Heart right ventricle (tissue), 16 donors: ENCODE measurements at regions of chr11 and their contacts with region 1.

Region 1: GRCh38 chr11:110296226-110297075 is at the start of gene RDX:
- DNase-seq: peak; percentile 67 to 82
- ATAC-seq: peak; percentile 80 to 94 (median 90)
- H3K4me3 ChIP-seq: peak within 1 kb of the TSS; percentile 57 to 99 (median 86)
- H3K27ac ChIP-seq: peak within 1 kb of the TSS; percentile 89 to 99 (median 98)
- H3K4me1 ChIP-seq: peaks cover 4 to 52% (median 38%) of the 10 kb centered on the region in 9 donors
- H3K27me3 ChIP-seq: no peaks in the 10 kb centered on the region
- CTCF ChIP-seq: peak in 3 of 9 donors; percentile 14 to 37 (median 16)
- total RNA-seq, gene RDX: 105 to 140 (median 127) TPM

Region 2: GRCh38 chr11:110251837-110252236 is 44.6 kb before region 1 on chr11:
- intact Hi-C with region 1: loop called in 1 of 10 experiments (anchors 5 kb)
- DNase-seq: peak in 1 of 2 donors; percentile 43
- ATAC-seq: peak in 7 of 8 donors; percentile 49 to 97 (median 91)
- H3K4me3 ChIP-seq: no peak overlapping the region
- H3K27ac ChIP-seq: peak overlapping the region in 6 of 10 donors; percentile 11 to 67 (median 34)
- H3K4me1 ChIP-seq: peaks cover 0 to 33% (median 22%) of the 10 kb centered on the region in 9 donors
- H3K27me3 ChIP-seq: no peaks in the 10 kb centered on the region
- CTCF ChIP-seq: no peak

Region 3: DNA sequence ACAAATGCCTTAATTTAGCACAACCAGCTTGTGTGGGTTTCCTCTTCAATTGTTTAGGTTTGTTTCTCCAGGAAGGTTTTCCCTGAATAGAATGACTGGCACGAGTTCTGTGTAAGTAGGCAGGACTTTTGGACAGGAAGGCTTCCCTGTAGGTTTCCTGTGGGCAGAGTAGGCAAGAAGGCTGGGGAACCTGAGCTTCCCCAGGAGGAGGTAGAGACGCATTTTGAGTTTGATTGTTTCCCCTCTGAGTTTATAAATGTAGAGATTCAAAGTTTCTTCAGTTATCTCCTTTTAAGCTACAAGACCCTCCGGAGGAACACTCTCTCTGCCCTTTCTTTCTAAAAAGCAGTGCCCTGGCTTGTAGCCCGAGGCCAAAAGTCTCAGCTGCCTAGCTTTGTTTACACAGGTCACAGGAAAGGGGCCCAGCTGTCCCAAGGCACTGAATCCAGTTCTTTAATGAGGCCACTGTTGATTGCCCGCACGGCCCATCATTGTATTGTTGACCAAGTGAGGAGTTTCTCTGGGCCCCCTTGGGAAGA is 66.6 kb after region 1 on chr11:
- intact Hi-C with region 1: loop called in 5 of 10 experiments (anchors 2 to 10 kb)
- DNase-seq: peak in 1 of 2 donors; percentile 20
- ATAC-seq: peak in 7 of 8 donors; percentile 46 to 79 (median 75)
- H3K4me3 ChIP-seq: no peak overlapping the region
- H3K27ac ChIP-seq: peak overlapping the region in 9 of 10 donors; percentile 29 to 72 (median 47)
- H3K4me1 ChIP-seq: peaks cover 0 to 44% (median 24%) of the 10 kb centered on the region in 9 donors
- H3K27me3 ChIP-seq: no peaks in the 10 kb centered on the region
- CTCF ChIP-seq: no peak

Region 4: GRCh38 chr11:110376711-110377324 is 80.4 kb after region 1 on chr11:
- intact Hi-C with region 1: loop called in 1 of 10 experiments (anchors 5 kb)
- DNase-seq: peak; percentile 51 to 85
- ATAC-seq: peak; percentile 68 to 92 (median 86)
- H3K4me3 ChIP-seq: peak overlapping the region in 4 of 10 donors; percentile 12 to 23 (median 20)
- H3K27ac ChIP-seq: peak overlapping the region in 7 of 10 donors; percentile 2 to 60 (median 34)
- H3K4me1 ChIP-seq: peaks cover 0 to 36% (median 13%) of the 10 kb centered on the region in 9 donors
- H3K27me3 ChIP-seq: no peaks in the 10 kb centered on the region
- CTCF ChIP-seq: peak; percentile 63 to 93 (median 83)